ENCODE measurements at regions of chr6 and their contacts with region 1.

Region 1: GRCh38 chr6:28940858-28941680 is 17.3 kb upstream of the TRIM27 start:
- DNase-seq: peak; percentile 78

Region 2: DNA sequence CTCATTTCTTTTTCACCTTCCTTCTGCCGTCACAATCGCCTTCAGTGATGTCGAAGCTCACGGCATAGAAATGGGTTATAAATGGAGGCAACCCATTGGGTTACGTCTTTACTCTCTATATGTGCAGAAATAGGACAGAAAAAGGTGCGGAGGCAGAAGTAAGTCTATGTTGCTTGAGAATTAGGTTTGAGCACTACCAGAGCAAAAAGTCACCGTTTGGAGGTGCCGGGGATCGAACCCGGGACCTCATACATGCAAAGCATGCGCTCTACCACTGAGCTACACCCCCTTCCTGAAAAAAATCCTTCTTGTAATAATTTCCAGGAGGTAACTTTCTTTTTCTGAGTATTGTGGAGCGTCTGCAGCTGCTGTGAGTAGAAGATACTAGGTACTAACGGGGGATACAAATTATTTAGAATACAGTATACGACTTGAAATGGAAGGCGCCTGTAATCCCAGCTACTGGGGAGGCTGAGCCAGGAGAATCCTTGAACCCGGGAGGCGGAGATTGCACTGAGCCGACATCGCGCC is 151.5 kb before region 1 on chr6:
- intact Hi-C with region 1: no loop called
- DNase-seq: no peak

Region 3: GRCh38 chr6:28824793-28825731 is 116.0 kb before region 1 on chr6:
- intact Hi-C with region 1: no loop called
- DNase-seq: no peak

Region 4: GRCh38 chr6:28838634-28839442 is 102.2 kb before region 1 on chr6:
- intact Hi-C with region 1: loop called (anchors 1 kb)
- DNase-seq: peak; percentile 89

Region 5: GRCh38 chr6:28923318-28924102 is 17.6 kb before region 1 on chr6 and contains the start of gene TRIM27:
- intact Hi-C with region 1: loop called (anchors 2 kb)
- DNase-seq: peak; percentile 96
- total RNA-seq, gene TRIM27: 21.0 TPM